Activated CD4-positive, alpha-beta T cell treated with anti-CD3 and anti-CD28 coated beads for 36 hours (primary cell): ENCODE measurements at regions of chr4 and their contacts with region 1.

Region 1: DNA sequence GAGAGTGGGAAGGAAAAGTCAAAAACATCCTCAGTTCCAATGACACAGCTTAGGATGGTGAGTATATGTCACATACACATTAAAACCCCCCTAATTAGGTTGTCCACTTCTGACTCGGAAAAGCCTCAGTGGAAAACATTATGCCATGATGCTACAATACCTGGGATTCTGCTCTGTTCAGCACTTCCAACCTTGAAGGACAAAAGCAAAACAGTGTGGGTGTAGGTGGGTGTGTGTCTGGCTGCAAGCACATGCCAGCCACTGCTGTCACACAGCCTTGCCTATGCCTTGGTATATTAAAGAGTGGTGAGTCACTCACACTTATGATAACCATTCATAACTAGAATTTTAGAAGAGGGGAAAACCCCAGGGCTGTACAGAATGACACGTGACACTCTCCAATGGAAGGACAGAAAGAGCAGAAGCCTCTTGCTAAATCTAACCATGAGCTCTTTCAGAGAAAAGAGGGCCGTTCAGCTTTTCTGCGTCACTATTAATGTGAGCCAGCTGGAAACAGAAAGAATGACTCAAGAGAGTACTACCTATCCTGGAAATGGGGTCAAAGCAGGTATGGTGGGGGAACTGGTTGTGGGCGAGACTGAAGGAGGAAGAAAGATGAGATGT is 159.6 kb downstream of the TET2 start:
- DNase-seq: peak; percentile 79
- ATAC-seq: peak; percentile 92
- H3K4me3 Mint-ChIP-seq: peak overlapping the region; percentile 46
- H3K27ac Mint-ChIP-seq: peak overlapping the region; percentile 91
- H3K4me1 Mint-ChIP-seq: peaks cover 28% of the 10 kb centered on the region
- H3K27me3 Mint-ChIP-seq: peaks cover 6% of the 10 kb centered on the region

Region 2: GRCh38 chr4:104966349-104967033 is 339.8 kb before region 1 on chr4:
- CTCF ChIA-PET with region 1: no interaction called
- POLR2A ChIA-PET with region 1: no interaction called
- intact Hi-C with region 1: loop called (anchors 1 kb)
- DNase-seq: peak; percentile 61
- ATAC-seq: peak; percentile 97
- H3K4me3 Mint-ChIP-seq: peak overlapping the region; percentile 43
- H3K27ac Mint-ChIP-seq: peak overlapping the region; percentile 98
- H3K4me1 Mint-ChIP-seq: peaks cover 18% of the 10 kb centered on the region
- H3K27me3 Mint-ChIP-seq: peaks cover 5% of the 10 kb centered on the region

Region 3: DNA sequence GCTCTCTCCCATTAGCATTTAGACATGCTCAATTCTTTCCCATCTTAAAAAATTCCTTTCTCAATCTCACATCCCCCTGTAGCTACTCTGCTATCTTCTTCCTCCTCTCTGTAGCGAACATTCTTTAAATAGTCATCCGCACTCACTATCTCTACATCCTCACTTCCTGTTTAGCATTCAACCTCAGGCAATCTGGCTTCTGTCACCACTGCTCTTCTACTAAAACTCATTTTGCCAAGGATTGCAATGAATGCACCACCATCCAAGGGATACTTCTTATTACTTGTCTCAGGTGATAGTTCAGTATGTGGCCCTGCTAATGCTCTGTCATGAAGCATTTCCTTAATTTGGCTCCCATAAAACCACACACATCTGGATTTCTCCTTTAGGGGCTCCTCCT is 170.5 kb before region 1 on chr4:
- CTCF ChIA-PET with region 1: interaction called, 4 read pairs
- POLR2A ChIA-PET with region 1: interaction called, 5 read pairs
- intact Hi-C with region 1: loop called (anchors 1 to 2 kb)
- DNase-seq: no peak
- ATAC-seq: no peak
- H3K4me3 Mint-ChIP-seq: no peak overlapping the region
- H3K27ac Mint-ChIP-seq: no peak overlapping the region
- H3K4me1 Mint-ChIP-seq: peaks cover 4% of the 10 kb centered on the region
- H3K27me3 Mint-ChIP-seq: no peaks in the 10 kb centered on the region

Region 4: DNA sequence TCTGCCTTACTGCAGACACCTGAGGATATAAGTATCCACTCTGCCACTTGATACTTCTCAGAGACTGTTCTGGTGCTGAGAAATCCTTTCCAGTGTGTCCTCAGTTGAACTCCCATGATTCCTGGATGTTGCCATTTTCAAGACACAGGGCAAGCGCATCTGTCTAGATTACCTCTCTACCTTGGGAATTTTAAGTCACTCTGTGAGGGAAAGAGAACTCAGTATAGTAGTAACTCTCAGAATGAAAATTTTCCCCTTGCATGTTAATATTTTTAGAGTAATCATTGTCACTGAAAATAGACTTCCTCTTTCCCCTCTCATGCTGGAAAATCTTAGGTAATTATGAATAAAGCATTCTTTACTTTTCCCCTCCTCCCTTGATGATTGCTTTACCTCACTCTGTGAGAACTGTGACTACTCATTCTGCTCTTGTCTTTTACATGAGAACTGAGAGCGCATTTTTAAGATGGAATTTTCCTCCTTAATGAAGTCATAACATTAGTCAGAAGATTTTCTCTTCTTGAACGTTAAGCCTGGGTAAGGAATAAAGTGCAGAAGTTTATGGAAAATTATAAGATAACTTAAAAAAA is 114.6 kb before region 1 on chr4:
- CTCF ChIA-PET with region 1: interaction called, 3 read pairs
- POLR2A ChIA-PET with region 1: no interaction called
- intact Hi-C with region 1: loop called (anchors 1 kb)
- DNase-seq: peak; percentile 11
- ATAC-seq: peak; percentile 70
- H3K4me3 Mint-ChIP-seq: peak overlapping the region; percentile 12
- H3K27ac Mint-ChIP-seq: peak overlapping the region; percentile 90
- H3K4me1 Mint-ChIP-seq: peaks cover 94% of the 10 kb centered on the region
- H3K27me3 Mint-ChIP-seq: no peaks in the 10 kb centered on the region

Region 5: DNA sequence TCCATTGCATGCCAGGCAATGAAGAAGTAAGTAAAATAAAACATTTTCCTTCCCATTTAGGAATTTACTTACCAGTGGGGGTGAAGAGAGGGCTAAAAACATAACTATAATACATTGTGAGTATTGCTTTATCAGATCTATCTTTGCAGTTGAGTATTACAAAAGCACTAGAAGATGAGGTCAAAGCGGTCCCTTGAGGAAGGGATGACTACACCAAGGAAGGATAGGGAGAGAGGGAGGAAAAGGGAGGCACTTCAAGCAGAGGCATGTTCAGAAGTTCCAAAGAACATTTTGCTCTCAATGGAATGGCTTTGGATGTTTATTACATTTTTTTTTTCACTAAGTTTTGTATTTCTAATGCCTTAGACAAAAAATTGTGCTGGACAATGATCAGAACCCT is 31.8 kb before region 1 on chr4:
- CTCF ChIA-PET with region 1: no interaction called
- POLR2A ChIA-PET with region 1: no interaction called
- intact Hi-C with region 1: loop called (anchors 1 to 5 kb)
- DNase-seq: no peak
- ATAC-seq: no peak
- H3K4me3 Mint-ChIP-seq: no peak overlapping the region
- H3K27ac Mint-ChIP-seq: no peak overlapping the region
- H3K4me1 Mint-ChIP-seq: peaks cover 56% of the 10 kb centered on the region
- H3K27me3 Mint-ChIP-seq: no peaks in the 10 kb centered on the region

Region 6: GRCh38 chr4:105453550-105454205 is 147.4 kb after region 1 on chr4:
- CTCF ChIA-PET with region 1: no interaction called
- POLR2A ChIA-PET with region 1: no interaction called
- intact Hi-C with region 1: loop called (anchors 1 to 5 kb)
- DNase-seq: peak; percentile 60
- ATAC-seq: peak; percentile 99
- H3K4me3 Mint-ChIP-seq: no peak overlapping the region
- H3K27ac Mint-ChIP-seq: peak overlapping the region; percentile 62
- H3K4me1 Mint-ChIP-seq: peaks cover 34% of the 10 kb centered on the region
- H3K27me3 Mint-ChIP-seq: no peaks in the 10 kb centered on the region